Common myeloid progenitor, CD34-positive (primary cell): ENCODE measurements at regions of chr2 and their contacts with region 1.

Region 1: DNA sequence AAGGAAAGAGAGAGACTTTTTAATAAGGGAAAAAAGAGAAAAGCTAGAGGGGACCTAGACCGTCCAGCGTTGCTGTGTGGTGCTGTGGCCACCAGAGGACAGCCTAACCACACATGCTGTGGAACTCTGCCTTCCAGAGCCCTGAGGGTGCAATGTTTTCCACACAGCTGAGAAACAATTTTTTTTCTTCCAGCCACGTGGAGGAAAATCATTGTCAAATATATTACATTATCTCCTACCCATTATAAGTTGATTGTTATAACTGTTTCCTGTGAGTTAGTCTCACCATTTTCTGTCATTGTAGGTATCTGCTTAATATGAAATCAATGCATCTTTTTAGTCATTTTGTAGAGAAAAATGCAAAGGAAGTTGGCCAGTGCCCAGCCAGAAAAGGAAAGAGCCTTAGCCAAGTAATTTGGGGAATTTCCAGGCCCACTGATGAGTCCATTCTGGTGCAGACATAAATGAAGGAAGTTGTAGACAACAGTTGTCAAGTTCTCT is 5.9 kb upstream of the MRPL19 start:
- DNase-seq: peak; percentile 31 to 66 (median 54)
- H3K4me3 ChIP-seq: no peak overlapping the region
- H3K27ac ChIP-seq: no peak overlapping the region
- H3K4me1 ChIP-seq: no peaks in the 10 kb centered on the region
- H3K27me3 ChIP-seq: peaks cover 0 to 11% (median 2%) of the 10 kb centered on the region in 5 experiments

Region 2: GRCh38 chr2:75574114-75574513 is 66.6 kb before region 1 on chr2:
- CTCF ChIA-PET with region 1: no interaction called
- POLR2A ChIA-PET with region 1: no interaction called
- DNase-seq: no peak
- H3K4me3 ChIP-seq: no peak overlapping the region
- H3K27ac ChIP-seq: no peak overlapping the region
- H3K4me1 ChIP-seq: no peaks in the 10 kb centered on the region
- H3K27me3 ChIP-seq: peaks cover 0 to 3% (median 0%) of the 10 kb centered on the region in 5 experiments

Region 3: DNA sequence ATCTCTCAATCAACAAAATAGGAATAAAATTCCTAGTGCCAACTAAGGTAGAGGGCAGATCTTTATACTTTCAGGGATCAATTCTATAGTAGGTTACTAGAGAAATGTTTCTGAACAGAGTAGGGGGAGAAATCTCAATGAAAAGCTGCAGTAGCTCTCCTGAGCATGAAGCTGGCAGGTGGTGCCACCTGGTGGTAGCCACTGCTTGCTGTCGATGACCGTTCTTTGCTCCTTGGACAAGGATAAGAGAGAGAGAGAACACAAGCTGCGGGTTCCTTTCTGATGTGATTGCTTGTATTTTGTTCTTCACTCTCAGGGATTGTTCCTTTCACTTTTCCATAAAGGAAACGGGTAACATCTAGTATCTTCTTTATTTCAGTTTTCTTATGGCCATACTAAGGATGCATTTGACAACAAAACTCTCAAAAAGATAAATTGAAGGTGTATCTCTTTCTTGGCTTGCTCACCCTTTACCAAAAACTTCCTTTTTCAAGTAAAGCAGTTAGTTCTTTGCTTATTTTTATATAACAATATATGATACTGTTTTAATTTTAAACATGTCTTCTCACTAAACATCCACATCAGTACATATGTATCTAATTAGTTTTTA is 12.7 kb before region 1 on chr2:
- CTCF ChIA-PET with region 1: interaction called, 11 read pairs
- POLR2A ChIA-PET with region 1: no interaction called
- DNase-seq: peak; percentile 64 to 83 (median 76)
- H3K4me3 ChIP-seq: no peak overlapping the region
- H3K27ac ChIP-seq: no peak overlapping the region
- H3K4me1 ChIP-seq: peaks cover 0 to 3% (median 0%) of the 10 kb centered on the region in 4 experiments
- H3K27me3 ChIP-seq: peaks cover 0 to 7% (median 2%) of the 10 kb centered on the region in 5 experiments

Region 4: GRCh38 chr2:75800456-75800855 is 159.8 kb after region 1 on chr2:
- CTCF ChIA-PET with region 1: no interaction called
- POLR2A ChIA-PET with region 1: no interaction called
- DNase-seq: no peak
- H3K4me3 ChIP-seq: no peak overlapping the region
- H3K27ac ChIP-seq: no peak overlapping the region
- H3K4me1 ChIP-seq: no peaks in the 10 kb centered on the region
- H3K27me3 ChIP-seq: peaks cover 0 to 1% (median 0%) of the 10 kb centered on the region in 5 experiments